Dendritic cell treated with granulocyte-macrophage colony-stimulating factor and Interleukin-4, amounts not matched to agents 40 ng/mL and 50 ng/mL, for 4 days (primary cell): ENCODE measurements at regions of chr9 and their contacts with region 1.

Region 1: GRCh38 chr9:34546834-34547827 is 24.3 kb upstream of the ENHO start:
- H3K4me3 Mint-ChIP-seq: no peak overlapping the region
- H3K27ac Mint-ChIP-seq: no peak overlapping the region
- H3K4me1 Mint-ChIP-seq: no peaks in the 10 kb centered on the region
- H3K27me3 Mint-ChIP-seq: peaks cover 38% of the 10 kb centered on the region

Region 2: DNA sequence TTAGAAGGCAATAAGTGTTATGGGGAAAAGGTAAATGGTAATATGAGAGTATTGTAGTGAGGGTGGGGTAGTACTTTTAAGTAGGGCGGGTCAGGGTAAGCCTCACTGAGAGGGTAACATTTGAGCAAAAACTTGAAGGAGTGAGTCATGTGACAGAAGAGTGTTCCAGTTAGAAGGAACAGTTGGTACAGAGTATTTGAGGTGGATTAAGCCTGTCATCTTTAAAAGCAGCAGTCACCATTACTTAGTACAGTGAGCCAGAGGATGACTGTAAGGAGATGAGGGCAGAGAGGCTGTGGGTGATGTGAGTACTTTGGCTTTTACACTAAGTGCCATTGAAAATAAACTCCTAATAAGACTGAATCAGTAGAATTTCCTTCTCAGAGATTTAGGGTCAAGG is 313.5 kb before region 1 on chr9:
- intact Hi-C with region 1: no loop called
- H3K4me3 Mint-ChIP-seq: no peak overlapping the region
- H3K27ac Mint-ChIP-seq: no peak overlapping the region
- H3K4me1 Mint-ChIP-seq: no peaks in the 10 kb centered on the region
- H3K27me3 Mint-ChIP-seq: no peaks in the 10 kb centered on the region

Region 3: DNA sequence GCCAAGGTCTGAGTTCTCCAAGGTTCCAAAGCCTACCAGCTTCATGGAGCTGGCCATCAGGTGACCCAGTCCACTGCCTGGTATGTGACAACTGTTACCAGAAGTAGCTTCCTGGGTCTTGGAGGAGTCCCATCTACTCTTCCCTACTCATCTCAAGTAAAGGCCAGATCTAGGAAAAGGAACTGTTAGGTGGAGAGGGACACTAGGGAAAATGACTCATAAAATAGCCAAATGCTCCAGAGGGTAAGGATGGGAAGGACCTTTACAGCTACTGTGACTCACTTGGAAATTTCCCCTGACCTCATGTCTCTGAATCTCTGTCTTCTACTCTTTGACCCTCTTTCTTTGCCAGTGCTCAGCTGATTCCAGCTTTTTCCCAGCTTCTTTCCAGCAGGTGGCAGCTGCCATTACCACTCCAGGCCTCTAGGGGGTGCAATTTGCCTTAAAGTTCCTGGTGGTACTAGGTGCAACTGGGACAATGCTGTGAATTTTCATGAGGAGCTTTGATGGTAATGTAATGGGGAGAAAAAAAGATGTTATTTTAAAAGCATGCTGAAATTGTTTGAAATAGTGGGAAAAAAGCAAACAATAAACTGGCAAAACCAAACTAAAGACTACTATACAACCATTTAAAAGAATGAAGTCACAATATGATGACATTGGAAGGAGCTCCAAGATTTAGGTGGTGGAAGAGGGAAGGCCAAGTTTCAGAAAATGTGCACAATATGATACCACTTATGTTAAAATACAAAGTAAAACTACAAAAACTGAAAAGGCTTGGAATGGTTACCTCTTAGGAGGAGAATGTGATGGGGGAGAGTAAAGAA is 143.4 kb before region 1 on chr9:
- intact Hi-C with region 1: loop called (anchors 10 kb)
- H3K4me3 Mint-ChIP-seq: no peak overlapping the region
- H3K27ac Mint-ChIP-seq: no peak overlapping the region
- H3K4me1 Mint-ChIP-seq: peaks cover 4% of the 10 kb centered on the region
- H3K27me3 Mint-ChIP-seq: no peaks in the 10 kb centered on the region

Region 4: DNA sequence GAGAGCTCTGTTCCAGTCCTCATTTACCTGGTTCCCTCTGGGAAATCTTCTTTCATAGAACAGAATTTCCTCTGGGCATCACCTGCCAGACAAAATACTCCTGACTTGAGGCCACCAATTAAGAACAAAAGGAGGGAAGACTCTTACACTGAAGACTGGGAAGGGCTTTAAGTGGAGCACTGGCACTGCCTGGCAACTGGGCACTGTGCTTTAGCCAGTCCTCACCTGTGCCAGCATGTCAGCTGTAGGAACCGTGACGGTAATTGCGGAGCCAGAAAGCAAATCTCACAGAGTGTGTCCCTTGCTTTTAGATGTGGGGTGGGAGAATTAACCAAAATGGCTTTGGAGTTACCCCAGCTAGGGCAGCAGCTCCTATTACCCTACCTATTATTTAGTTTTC is 129.4 kb before region 1 on chr9:
- intact Hi-C with region 1: no loop called
- H3K4me3 Mint-ChIP-seq: no peak overlapping the region
- H3K27ac Mint-ChIP-seq: no peak overlapping the region
- H3K4me1 Mint-ChIP-seq: no peaks in the 10 kb centered on the region
- H3K27me3 Mint-ChIP-seq: peaks cover 2% of the 10 kb centered on the region

Region 5: GRCh38 chr9:34437006-34437925 is 109.9 kb before region 1 on chr9:
- intact Hi-C with region 1: loop called (anchors 1 kb)
- H3K4me3 Mint-ChIP-seq: no peak overlapping the region
- H3K27ac Mint-ChIP-seq: no peak overlapping the region
- H3K4me1 Mint-ChIP-seq: peaks cover 14% of the 10 kb centered on the region
- H3K27me3 Mint-ChIP-seq: no peaks in the 10 kb centered on the region

Region 6: GRCh38 chr9:34591248-34591916 is 44.3 kb after region 1 on chr9:
- intact Hi-C with region 1: loop called (anchors 2 kb)
- H3K4me3 Mint-ChIP-seq: peak overlapping the region; percentile 75
- H3K27ac Mint-ChIP-seq: no peak overlapping the region
- H3K4me1 Mint-ChIP-seq: peaks cover 48% of the 10 kb centered on the region
- H3K27me3 Mint-ChIP-seq: peaks cover 78% of the 10 kb centered on the region

Region 7: DNA sequence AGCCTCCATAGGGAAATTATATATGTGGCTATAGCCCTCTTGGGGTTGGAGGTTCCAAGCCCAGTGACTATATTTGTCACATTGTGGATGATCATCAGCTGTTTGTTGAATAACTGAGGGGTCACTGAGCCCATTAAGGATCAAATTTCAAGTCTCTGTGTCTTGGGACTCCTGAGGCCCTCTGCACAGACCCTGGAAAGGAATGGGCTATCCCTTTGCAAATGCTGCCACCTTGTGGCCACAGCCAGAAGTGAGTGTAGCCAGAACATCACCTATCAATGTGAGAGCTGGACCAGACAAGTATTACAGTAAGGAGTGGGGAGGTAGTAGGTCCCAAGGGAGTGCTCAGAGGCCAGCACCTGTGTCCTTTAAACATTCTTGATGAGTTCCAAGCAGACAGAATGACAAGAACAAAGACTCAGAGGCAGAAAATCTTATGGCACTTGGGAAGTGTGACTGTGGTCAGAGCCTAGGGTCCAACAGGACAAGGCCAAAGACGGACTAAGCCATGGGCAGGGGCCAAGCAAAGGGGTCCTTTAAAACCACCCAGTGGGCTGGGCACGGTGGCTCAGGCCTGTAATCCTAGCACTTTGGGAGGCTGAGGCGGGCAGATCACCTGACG is 56.6 kb after region 1 on chr9:
- intact Hi-C with region 1: loop called (anchors 1 kb)
- H3K4me3 Mint-ChIP-seq: no peak overlapping the region
- H3K27ac Mint-ChIP-seq: no peak overlapping the region
- H3K4me1 Mint-ChIP-seq: no peaks in the 10 kb centered on the region
- H3K27me3 Mint-ChIP-seq: peaks cover 26% of the 10 kb centered on the region

Region 8: GRCh38 chr9:34637356-34638137 is 90.4 kb after region 1 on chr9 and contains the start of gene SIGMAR1:
- intact Hi-C with region 1: loop called (anchors 2 kb)
- H3K4me3 Mint-ChIP-seq: peak within 1 kb of the TSS; percentile 91
- H3K27ac Mint-ChIP-seq: peak within 1 kb of the TSS; percentile 98
- H3K4me1 Mint-ChIP-seq: peaks cover 39% of the 10 kb centered on the region
- H3K27me3 Mint-ChIP-seq: peaks cover 2% of the 10 kb centered on the region